ENCODE measurements at regions of chr7 and their contacts with region 1.

Region 1: DNA sequence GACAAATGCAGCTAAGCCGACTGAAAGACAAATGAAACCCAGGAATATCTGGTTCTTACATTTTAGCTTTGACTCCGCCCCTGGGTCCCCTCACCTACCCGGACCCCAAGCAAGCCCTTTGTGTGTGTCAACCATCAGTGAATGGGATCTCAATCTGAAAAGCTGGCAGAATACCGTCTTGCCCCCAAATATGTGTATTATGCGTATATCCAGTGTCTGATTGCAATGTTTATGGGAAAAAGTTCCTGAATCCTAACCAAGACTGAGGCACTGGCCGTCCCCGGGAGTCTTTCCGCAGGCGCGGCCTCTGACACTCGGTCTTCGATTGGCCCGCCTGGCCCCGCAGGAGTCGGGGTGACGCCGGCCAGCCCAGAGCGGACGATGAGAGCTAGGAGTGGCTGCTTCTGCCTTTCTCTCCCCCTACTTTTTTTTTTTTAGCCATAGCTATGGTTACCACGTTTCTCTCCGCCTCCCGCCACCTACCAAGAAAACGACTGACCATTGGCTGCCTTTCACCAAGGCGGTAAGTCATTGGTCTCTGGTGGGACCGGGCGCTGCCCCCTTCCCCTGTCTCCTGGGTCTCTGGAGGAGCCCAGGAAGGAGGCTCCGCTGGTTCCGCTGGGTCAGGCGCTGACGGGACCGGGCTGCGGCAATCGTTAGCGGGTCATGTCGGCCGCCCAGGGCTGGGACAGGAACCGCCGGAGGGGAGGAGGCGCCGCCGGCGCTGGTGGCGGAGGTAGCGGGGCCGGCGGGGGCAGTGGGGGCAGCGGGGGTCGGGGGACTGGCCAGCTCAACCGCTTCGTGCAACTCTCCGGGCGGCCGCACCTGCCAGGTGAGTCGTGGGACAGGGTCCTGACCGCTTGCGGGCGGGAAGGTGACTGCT is at the start of gene KLHDC10:
- DNase-seq: peak; percentile 98
- CTCF ChIP-seq: no peak

Region 2: GRCh38 chr7:129923709-129924108 is 146.5 kb before region 1 on chr7:
- in situ Hi-C with region 1: no loop called
- DNase-seq: peak; percentile 47
- CTCF ChIP-seq: no peak

Region 3: GRCh38 chr7:130277763-130278643 is 207.8 kb after region 1 on chr7:
- in situ Hi-C with region 1: no loop called
- DNase-seq: no peak
- CTCF ChIP-seq: peak; percentile 1

Region 4: GRCh38 chr7:130758429-130759056 is 688.3 kb after region 1 on chr7:
- in situ Hi-C with region 1: loop called (anchors 10 kb)
- DNase-seq: peak; percentile 48
- CTCF ChIP-seq: peak; percentile 62

Region 5: DNA sequence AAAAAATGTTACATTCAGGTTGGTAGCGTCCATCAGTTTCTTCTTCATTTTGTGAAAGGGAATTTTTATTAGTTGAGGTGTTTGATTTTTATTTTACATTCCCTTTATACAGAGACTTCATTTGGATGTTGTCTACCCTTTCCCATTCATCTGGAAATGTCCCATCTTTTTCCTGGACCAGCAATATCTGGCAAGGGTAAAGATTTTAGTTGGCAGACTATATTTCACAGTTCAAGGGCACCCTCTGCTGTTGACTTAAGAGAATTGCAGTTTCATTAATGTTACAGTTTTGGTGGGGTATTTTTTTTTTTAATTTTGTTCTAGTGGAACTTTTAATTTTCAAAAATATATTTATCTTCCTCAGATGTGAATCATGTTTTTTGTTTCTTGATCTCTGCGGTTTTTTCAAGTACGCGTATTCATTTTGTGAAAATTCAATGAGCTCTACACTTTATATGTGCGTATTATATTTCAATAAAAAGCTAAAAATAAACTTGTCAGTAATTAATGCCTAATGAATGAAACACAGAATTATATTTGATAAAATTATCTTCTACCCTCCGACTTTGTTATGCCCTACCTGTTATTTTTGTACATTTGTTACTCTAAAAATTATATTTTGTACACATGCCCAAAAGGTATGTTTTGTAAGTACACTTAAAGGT is 761.7 kb after region 1 on chr7:
- in situ Hi-C with region 1: loop called (anchors 25 kb)
- DNase-seq: peak; percentile 58
- CTCF ChIP-seq: peak; percentile 71

Measured in GM13977 (cell line).